GM12878 (cell line): ENCODE measurements at regions of chr16 and their contacts with region 1.

Region 1: GRCh38 chr16:56964243-56965148 is 2.7 kb downstream of the CETP start:
- DNase-seq: no peak
- ATAC-seq: peak; percentile 92
- H3K4me3 ChIP-seq: no peak overlapping the region
- H3K27ac ChIP-seq: no peak overlapping the region
- H3K4me1 ChIP-seq: peaks cover 7% of the 10 kb centered on the region
- H3K27me3 ChIP-seq: no peaks in the 10 kb centered on the region
- CTCF ChIP-seq: peak; percentile 100; a peak in 5 of 6 replicates
- EP300 ChIP-seq: no peak
- POLR2A ChIP-seq: no peak
- RAD21 ChIP-seq: peak; percentile 97

Region 2: GRCh38 chr16:56814537-56815432 is 149.7 kb before region 1 on chr16:
- CTCF ChIA-PET with region 1: no interaction called
- POLR2A ChIA-PET with region 1: no interaction called
- RAD21 ChIA-PET with region 1: no interaction called
- SMC1A ChIA-PET with region 1: no interaction called
- in situ Hi-C with region 1: no loop called
- intact Hi-C with region 1: no loop called
- DNase-seq: no peak
- ATAC-seq: no peak
- H3K4me3 ChIP-seq: no peak overlapping the region
- H3K27ac ChIP-seq: no peak overlapping the region
- H3K4me1 ChIP-seq: no peaks in the 10 kb centered on the region
- H3K27me3 ChIP-seq: no peaks in the 10 kb centered on the region
- CTCF ChIP-seq: no peak
- EP300 ChIP-seq: no peak
- POLR2A ChIP-seq: no peak
- RAD21 ChIP-seq: no peak

Region 3: DNA sequence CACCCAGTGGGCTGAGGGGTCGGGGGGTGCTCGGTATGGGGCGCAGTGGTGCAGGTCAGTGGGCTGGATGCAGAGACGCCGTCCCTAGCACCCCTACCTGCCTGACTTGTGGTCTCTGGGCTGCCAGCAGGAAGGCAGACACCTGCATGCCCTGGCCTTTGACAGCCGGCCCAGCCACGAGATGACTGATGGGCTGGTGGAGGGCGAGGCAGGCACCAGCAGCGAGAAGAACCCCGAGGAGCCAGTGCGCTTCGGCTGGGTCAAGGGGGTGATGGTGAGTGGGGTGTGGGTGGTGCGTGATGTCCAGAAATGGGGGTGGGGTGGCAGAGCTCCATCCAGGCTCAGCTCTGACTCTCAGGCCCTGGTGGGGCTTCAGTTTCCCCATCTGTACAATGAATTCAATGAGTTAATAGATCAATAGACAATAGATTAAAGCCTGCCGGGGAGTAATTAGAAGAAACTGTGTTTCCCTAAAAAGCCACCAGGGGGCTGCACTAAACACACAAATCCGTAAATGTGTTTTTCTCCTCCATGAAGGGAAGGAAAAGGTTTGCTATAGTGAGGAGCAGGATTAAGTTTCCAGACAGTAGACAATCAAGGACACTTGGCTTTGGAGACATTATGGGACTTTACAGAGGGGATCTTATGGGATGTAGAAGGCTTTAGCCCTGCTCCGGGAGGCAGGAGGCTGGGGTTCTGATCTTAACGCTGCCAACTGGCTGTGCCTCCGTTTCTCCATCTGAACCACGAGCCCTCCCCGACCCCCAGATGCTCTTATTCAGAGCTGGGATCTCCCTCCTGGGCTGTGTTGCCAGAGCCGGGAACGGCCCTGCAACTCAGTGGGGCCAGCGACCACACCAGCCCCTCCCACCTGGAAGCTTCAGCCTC is 97.3 kb before region 1 on chr16:
- CTCF ChIA-PET with region 1: interaction called, 96 read pairs
- POLR2A ChIA-PET with region 1: no interaction called
- RAD21 ChIA-PET with region 1: interaction called, 13 read pairs
- SMC1A ChIA-PET with region 1: interaction called, 10 read pairs
- in situ Hi-C with region 1: no loop called
- intact Hi-C with region 1: no loop called
- DNase-seq: no peak
- ATAC-seq: peak; percentile 27
- H3K4me3 ChIP-seq: no peak overlapping the region
- H3K27ac ChIP-seq: no peak overlapping the region
- H3K4me1 ChIP-seq: peaks cover 35% of the 10 kb centered on the region
- H3K27me3 ChIP-seq: no peaks in the 10 kb centered on the region
- CTCF ChIP-seq: peak; percentile 65 to 75 (median 65)
- EP300 ChIP-seq: no peak
- POLR2A ChIP-seq: no peak
- RAD21 ChIP-seq: peak; percentile 88

Region 4: GRCh38 chr16:56950881-56951771 is 13.4 kb before region 1 on chr16:
- CTCF ChIA-PET with region 1: interaction called, 68 read pairs
- POLR2A ChIA-PET with region 1: interaction called, 3 read pairs
- RAD21 ChIA-PET with region 1: interaction called, 6 read pairs
- SMC1A ChIA-PET with region 1: interaction called, 6 read pairs
- in situ Hi-C with region 1: no loop called
- intact Hi-C with region 1: no loop called
- DNase-seq: no peak
- ATAC-seq: peak; percentile 86
- H3K4me3 ChIP-seq: no peak overlapping the region
- H3K27ac ChIP-seq: no peak overlapping the region
- H3K4me1 ChIP-seq: peaks cover 18% of the 10 kb centered on the region
- H3K27me3 ChIP-seq: no peaks in the 10 kb centered on the region
- CTCF ChIP-seq: peak; percentile 71 to 90 (median 89)
- EP300 ChIP-seq: 0 out of 4 replicates have a peak, but pooled peaks of 1 of the 2 experiments have one; percentile 64
- POLR2A ChIP-seq: no peak
- RAD21 ChIP-seq: peak; percentile 83

Region 5: GRCh38 chr16:57000271-57001025 is 36.0 kb after region 1 on chr16:
- CTCF ChIA-PET with region 1: interaction called, 55 read pairs
- POLR2A ChIA-PET with region 1: interaction called, 37 read pairs
- RAD21 ChIA-PET with region 1: interaction called, 473 read pairs
- SMC1A ChIA-PET with region 1: interaction called, 604 read pairs
- in situ Hi-C with region 1: no loop called
- intact Hi-C with region 1: loop called (anchors 5 kb)
- DNase-seq: peak; percentile 87
- ATAC-seq: peak; percentile 80
- H3K4me3 ChIP-seq: peak overlapping the region; percentile 20; the same call in 1 of the 2 replicates
- H3K27ac ChIP-seq: peak overlapping the region; percentile 93
- H3K4me1 ChIP-seq: peaks cover 52% of the 10 kb centered on the region
- H3K27me3 ChIP-seq: no peaks in the 10 kb centered on the region
- CTCF ChIP-seq: no peak
- EP300 ChIP-seq: no peak
- POLR2A ChIP-seq: no peak; the same call in 1 of the 2 replicates
- RAD21 ChIP-seq: no peak

Region 6: DNA sequence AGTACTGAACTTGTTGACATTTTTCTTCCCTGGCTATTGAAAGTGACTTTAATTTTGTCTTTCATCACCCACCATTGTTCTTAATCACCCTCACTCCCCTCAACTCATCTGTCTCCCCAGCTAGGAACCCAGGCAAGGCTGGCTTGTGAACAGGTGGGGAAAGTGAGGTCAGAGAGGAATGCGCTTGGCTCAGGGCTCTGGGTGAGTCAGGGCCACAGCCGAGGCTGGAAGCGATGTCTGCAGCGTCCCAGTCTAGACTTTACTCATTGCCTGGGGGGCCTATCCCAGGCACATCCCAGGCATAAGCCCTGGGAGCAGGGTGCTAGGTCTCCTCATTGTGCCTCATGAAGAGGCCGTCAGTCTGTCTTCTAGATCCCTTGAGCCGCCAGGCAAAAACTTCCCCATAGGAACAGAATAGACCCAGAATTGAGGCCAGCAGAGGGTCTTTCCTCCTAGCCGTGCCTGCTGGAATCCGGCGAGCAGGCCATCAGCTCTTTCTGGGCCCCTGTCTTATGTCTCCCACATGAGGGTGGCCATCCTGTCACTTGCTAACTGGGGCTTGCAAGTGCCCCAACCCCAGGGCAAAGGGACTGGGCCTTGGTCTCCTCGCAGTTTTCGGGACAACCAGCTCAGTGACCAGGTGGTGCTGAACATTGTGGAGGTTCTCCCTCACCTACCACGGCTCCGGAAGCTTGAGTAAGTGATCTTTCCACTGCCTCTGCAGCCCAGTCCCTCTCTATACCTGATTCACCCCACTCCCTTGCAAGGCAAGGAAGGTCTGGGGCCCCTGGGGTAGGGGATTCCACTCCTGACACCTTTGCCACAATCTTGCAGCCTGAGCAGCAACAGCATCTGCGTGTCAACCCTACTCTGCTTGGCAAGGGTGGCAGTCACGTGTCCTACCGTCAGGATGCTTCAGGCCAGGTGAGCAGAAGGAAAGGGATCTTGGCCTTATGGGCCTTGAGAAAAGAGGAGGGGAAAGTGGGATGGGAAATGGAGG is 65.0 kb after region 1 on chr16:
- CTCF ChIA-PET with region 1: interaction called, 10 read pairs
- POLR2A ChIA-PET with region 1: interaction called, 3 read pairs
- RAD21 ChIA-PET with region 1: interaction called, 4 read pairs
- SMC1A ChIA-PET with region 1: interaction called, 4 read pairs
- in situ Hi-C with region 1: no loop called
- intact Hi-C with region 1: no loop called
- DNase-seq: no peak
- ATAC-seq: no peak
- H3K4me3 ChIP-seq: no peak overlapping the region
- H3K27ac ChIP-seq: no peak overlapping the region
- H3K4me1 ChIP-seq: no peaks in the 10 kb centered on the region
- H3K27me3 ChIP-seq: no peaks in the 10 kb centered on the region
- CTCF ChIP-seq: no peak
- EP300 ChIP-seq: no peak
- POLR2A ChIP-seq: no peak
- RAD21 ChIP-seq: no peak

Region 7: DNA sequence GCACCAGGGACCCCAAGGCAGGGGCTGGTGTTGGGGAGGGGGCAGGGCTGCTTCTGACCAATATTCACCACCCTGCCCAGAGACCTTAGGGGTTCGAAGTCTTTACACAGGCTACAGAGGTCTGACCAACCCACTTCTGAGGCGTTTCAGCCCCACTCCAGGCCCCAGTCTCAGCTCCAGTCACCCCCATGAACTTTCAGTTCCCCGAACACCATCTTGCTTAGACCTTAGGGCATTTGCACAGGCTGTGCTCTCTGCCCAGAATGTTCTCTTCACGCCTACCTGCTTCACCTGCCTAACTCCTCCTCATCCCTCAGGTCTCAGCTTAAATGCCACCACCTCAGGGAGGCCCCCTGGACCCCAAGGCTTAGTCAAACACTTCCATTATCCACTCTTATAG is 102.1 kb after region 1 on chr16:
- CTCF ChIA-PET with region 1: interaction called, 29 read pairs
- POLR2A ChIA-PET with region 1: no interaction called
- RAD21 ChIA-PET with region 1: interaction called, 7 read pairs
- SMC1A ChIA-PET with region 1: interaction called, 12 read pairs
- in situ Hi-C with region 1: no loop called
- intact Hi-C with region 1: no loop called
- DNase-seq: no peak
- ATAC-seq: peak; percentile 78
- H3K4me3 ChIP-seq: no peak overlapping the region
- H3K27ac ChIP-seq: no peak overlapping the region
- H3K4me1 ChIP-seq: peaks cover 17% of the 10 kb centered on the region
- H3K27me3 ChIP-seq: no peaks in the 10 kb centered on the region
- CTCF ChIP-seq: no peak
- EP300 ChIP-seq: no peak
- POLR2A ChIP-seq: 0 out of 2 replicates have a peak, but pooled peaks have one; percentile 6
- RAD21 ChIP-seq: no peak

Region 8: GRCh38 chr16:57167953-57168352 is 203.5 kb after region 1 on chr16:
- CTCF ChIA-PET with region 1: interaction called, 4 read pairs
- POLR2A ChIA-PET with region 1: no interaction called
- RAD21 ChIA-PET with region 1: no interaction called
- SMC1A ChIA-PET with region 1: interaction called, 5 read pairs
- in situ Hi-C with region 1: loop called (anchors 5 kb)
- intact Hi-C with region 1: loop called (anchors 1 kb)
- DNase-seq: no peak
- ATAC-seq: peak; percentile 90
- H3K4me3 ChIP-seq: no peak overlapping the region
- H3K27ac ChIP-seq: no peak overlapping the region; the same call in 1 of the 2 replicates
- H3K4me1 ChIP-seq: peaks cover 19% of the 10 kb centered on the region
- H3K27me3 ChIP-seq: no peaks in the 10 kb centered on the region
- CTCF ChIP-seq: peak; percentile 61 to 82 (median 65)
- EP300 ChIP-seq: no peak
- POLR2A ChIP-seq: no peak
- RAD21 ChIP-seq: peak; percentile 96